ENCODE measurements at regions of chr9 and their contacts with region 1.

Region 1: DNA sequence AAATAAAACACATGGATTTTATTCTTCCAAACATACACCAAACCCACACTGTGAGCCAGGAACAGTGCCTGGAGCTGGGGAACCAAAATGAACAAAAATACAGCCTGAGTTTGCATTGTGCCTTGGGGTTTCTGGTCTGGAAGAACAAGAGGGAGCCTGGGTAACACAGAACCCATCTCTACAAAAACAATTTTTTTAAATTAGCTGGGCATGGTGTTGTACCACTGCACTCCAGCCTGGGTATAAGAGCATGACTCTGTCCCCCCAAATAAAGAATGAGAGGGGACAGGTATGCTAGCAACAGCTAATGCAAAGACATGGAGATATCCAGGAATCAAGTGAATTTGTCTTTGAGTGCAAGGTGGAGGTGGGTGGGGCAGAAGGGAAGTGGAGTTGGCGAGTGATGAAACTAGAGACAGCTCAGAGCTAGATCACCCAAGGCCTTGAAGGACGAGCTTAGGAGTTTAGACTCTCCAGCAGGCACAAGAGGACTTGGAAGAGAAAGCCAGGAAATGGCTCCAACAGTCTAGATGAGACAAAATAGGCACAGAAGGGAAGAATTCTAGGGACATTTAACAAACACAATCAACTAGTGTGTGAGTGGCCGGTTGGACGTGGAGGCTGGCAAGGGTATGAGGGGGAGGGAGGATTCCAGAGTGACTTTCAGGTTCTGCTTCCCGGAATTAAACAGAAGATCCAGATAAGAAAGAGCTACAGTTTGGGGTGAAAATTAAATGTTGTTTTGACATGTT is 47.4 kb downstream of the FNBP1 start:
- DNase-seq: no peak
- H3K4me3 Mint-ChIP-seq: peak overlapping the region; percentile 76
- H3K27ac Mint-ChIP-seq: peak overlapping the region; percentile 95
- H3K4me1 Mint-ChIP-seq: peaks cover 65% of the 10 kb centered on the region
- H3K27me3 Mint-ChIP-seq: no peaks in the 10 kb centered on the region

Region 2: GRCh38 chr9:129850821-129851540 is 144.6 kb before region 1 on chr9:
- intact Hi-C with region 1: no loop called
- DNase-seq: no peak
- H3K4me3 Mint-ChIP-seq: no peak overlapping the region
- H3K27ac Mint-ChIP-seq: no peak overlapping the region
- H3K4me1 Mint-ChIP-seq: peaks cover 24% of the 10 kb centered on the region
- H3K27me3 Mint-ChIP-seq: no peaks in the 10 kb centered on the region

Region 3: DNA sequence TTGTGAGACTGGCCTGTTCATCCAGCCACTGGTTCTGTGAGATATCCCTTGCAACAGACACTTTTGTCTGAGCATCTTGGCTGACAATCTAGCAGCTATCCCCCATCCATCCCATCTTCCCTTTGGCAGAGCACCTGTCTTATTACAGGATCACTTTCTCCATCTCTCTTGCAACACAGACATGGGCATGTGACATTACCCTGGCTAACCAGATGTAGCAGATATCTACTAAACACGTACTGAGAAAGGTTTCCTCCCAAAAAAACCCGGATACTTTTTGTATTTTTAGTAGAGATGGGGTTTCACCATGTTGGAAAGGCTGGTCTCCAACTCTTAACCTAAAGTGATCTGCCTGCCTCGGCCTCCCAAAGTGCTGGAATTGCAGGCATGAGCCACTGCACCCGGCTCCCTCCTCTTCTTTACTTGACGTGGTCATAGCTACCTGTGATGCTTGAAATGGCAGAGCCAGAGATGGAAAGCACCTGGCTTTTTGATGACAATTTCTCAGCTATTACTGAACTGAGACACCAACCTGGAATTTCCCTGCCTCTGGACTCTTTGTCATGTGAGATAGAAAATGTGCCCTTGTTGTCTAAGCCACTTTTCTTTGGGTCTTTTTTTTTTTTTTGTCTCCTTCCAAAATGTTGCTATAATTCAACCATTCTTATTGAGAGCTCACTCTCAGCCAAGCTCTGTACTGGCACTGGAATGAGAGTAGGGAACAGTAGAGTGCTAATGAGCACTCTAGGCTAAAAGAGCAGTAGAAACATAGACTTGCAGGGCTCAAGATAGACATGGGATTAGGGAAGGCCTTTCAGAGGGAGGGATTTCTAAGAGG is 14.8 kb after region 1 on chr9:
- intact Hi-C with region 1: loop called (anchors 1 kb)
- DNase-seq: peak; percentile 44
- H3K4me3 Mint-ChIP-seq: peak overlapping the region; percentile 48
- H3K27ac Mint-ChIP-seq: peak overlapping the region; percentile 97
- H3K4me1 Mint-ChIP-seq: peaks cover 72% of the 10 kb centered on the region
- H3K27me3 Mint-ChIP-seq: no peaks in the 10 kb centered on the region

Region 4: DNA sequence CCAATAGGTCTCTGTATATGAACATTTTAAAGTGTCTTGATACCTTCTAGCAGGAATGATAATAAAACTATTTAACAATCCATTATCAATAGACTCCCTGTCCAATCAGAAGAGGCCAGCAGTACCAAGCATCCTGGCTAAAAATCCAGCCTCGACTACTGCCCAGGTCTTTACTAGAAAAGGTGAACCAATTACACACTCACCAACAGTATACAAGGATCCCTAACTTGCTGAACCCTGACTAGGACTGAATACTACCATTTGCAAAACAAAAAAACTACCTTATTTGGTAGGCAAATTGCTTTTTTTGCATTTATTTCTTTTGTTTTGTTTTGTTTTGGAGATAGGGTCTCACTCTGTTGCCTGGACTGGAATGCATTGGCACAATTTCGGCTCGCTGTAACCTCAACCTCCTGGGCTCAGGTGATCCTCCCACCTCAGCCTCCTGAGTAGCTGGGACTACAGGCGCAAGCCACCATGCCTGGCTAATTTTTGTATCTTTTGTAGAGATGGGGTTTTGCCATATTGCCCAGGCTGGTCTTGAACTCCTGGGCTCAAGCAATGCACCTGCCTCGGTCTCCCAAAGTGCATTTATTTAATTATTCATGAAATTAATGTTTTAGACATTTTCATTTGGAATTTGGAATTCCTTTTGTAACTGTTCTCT is 19.9 kb after region 1 on chr9:
- intact Hi-C with region 1: loop called (anchors 1 kb)
- DNase-seq: no peak
- H3K4me3 Mint-ChIP-seq: no peak overlapping the region
- H3K27ac Mint-ChIP-seq: no peak overlapping the region
- H3K4me1 Mint-ChIP-seq: peaks cover 65% of the 10 kb centered on the region
- H3K27me3 Mint-ChIP-seq: no peaks in the 10 kb centered on the region